CD4-positive, alpha-beta memory T cell (primary cell): ENCODE measurements at regions of chr2 and their contacts with region 1.

Region 1: DNA sequence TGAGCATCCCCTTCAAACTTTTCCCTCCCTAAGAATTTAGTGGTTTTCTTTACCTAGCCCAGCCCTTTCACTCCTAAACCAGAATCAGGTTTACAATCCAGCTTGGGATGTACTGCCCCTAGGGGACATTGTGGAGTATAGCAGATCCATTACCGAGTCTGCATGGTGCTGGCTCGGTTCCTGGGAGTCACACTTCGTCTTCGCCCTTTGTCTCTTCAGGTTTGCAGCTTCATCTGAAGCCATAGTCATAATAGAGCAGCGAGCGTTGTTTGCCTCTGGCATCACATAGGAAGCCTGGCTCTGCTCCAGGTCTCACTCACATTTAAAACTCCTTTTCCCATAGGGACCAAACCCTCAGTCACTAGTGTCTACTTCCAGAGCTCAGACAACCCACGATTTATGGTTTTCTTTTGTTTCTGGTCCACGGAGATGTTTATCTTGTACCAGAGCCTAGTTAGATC is 16.8 kb upstream of the LYPD6 start:
- DNase-seq: peak in 2 of 5 donors; percentile 2 to 6
- H3K4me3 ChIP-seq: no peak overlapping the region
- H3K4me3 Mint-ChIP-seq: peak overlapping the region in 3 of 8 donors; percentile 6 to 20 (median 12)
- H3K27ac ChIP-seq: no peak overlapping the region
- H3K27ac Mint-ChIP-seq: no peak overlapping the region
- H3K4me1 ChIP-seq: peaks cover 3% of the 10 kb centered on the region
- H3K4me1 Mint-ChIP-seq: peaks cover 0 to 6% (median 2%) of the 10 kb centered on the region in 4 donors
- H3K27me3 ChIP-seq: no peaks in the 10 kb centered on the region
- H3K27me3 Mint-ChIP-seq: peaks cover 13 to 17% of the 10 kb centered on the region in 2 donors

Region 2: DNA sequence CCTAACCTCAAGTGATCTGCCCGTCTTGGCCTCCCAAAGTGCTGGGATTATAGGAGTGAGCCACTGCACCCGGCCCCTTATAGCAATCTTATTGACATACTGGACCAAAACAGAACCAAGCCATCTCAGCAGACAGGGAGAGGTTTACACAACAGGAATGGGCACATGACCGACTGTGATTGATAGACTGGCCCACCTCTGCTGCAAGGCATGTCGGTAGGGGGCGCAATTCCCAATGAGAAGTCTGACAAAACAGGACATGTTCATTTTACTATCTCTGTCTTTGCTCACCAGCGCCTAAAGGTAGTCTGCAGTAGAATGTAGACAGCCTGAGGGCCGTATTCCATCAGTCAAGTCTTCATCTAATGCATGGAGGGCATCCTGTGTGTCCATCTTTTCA is 273.1 kb before region 1 on chr2:
- CTCF ChIA-PET with region 1: no interaction called
- POLR2A ChIA-PET with region 1: no interaction called
- intact Hi-C with region 1: loop called (anchors 10 kb)
- DNase-seq: peak in 4 of 5 donors; percentile 28 to 36 (median 34)
- H3K4me3 ChIP-seq: no peak overlapping the region
- H3K4me3 Mint-ChIP-seq: peak overlapping the region in 1 of 8 donors; percentile 63
- H3K27ac ChIP-seq: no peak overlapping the region
- H3K27ac Mint-ChIP-seq: no peak overlapping the region
- H3K4me1 ChIP-seq: no peaks in the 10 kb centered on the region
- H3K4me1 Mint-ChIP-seq: peaks cover 0 to 5% (median 0%) of the 10 kb centered on the region in 4 donors
- H3K27me3 ChIP-seq: peaks cover 10% of the 10 kb centered on the region
- H3K27me3 Mint-ChIP-seq: peaks cover 25 to 36% of the 10 kb centered on the region in 2 donors